CD14-positive monocyte (primary cell): ENCODE measurements at regions of chr6 and their contacts with region 1.

Region 1: DNA sequence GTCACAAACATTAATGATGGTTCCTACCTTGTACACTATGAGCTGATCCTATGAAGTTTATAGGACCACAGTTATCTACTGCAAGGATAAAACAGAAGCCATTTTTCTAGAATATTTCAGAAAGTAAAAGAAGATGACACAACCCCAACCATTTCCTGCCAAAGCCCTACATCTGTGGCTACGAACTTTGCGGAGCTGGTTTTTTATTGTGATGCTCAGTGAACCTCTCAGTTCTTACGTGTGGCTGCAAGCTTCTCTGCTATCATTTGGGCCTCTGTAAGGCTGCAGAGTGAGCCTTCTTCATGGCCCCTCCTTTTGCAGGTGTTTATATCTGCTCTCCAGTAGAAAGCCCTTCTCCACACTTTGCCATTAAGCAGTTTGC is 17.8 kb upstream of the TAGAP start:
- DNase-seq: peak; percentile 46 to 68 (median 63)
- H3K4me3 ChIP-seq: peak overlapping the region in 1 of 3 experiments; percentile 52
- H3K4me3 Mint-ChIP-seq: peak overlapping the region; percentile 39 to 75
- H3K27ac ChIP-seq: peak overlapping the region; percentile 76 to 94
- H3K27ac Mint-ChIP-seq: peak overlapping the region; percentile 93 to 99 (median 97)
- H3K4me1 ChIP-seq: peaks cover 50 to 55% of the 10 kb centered on the region in 2 donors
- H3K4me1 Mint-ChIP-seq: peaks cover 57% of the 10 kb centered on the region
- H3K27me3 ChIP-seq: no peaks in the 10 kb centered on the region
- H3K27me3 Mint-ChIP-seq: no peaks in the 10 kb centered on the region
- CTCF ChIP-seq: no peak

Region 2: DNA sequence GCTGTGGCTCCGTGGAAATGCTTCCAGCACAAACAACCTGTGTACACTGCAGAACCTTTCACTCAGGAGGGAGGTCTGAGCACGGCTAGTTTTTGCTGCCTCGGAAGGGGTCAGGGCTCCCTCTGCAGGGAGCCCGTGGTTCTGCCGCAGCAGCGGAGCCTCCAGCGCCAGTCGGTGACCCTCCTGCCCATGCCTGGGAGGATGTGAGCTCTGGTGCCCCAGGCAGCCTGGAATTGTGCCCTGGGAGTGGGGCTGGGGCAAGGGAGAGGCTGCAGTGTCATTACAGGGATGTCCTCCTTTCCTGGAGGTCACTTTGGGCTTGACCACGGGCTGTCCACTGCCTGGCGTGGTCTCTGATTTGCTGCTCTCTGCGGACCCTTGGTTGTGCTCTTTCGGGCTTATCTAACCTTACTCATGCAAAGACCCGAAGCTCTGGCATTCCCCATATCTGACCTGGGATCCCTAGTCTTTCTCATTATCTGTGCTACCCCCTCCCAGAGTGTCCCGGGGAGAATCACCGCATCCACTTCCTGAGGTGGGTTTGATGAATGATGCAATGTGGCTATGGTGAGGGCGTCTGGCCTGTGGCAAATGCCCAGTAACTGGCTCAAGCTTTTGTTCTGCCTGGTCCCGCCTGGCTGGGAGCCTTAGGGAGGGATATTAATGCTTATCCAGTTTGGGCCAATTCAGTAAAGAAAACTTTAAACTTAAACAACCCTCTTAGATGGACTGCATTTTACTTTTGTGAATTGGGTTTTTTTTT is 41.8 kb after region 1 on chr6:
- intact Hi-C with region 1: loop called in 1 of 2 experiments (anchors 5 kb)
- DNase-seq: peak; percentile 76 to 82 (median 79)
- H3K4me3 ChIP-seq: no peak overlapping the region
- H3K4me3 Mint-ChIP-seq: peak overlapping the region in 1 of 2 donors; percentile 4
- H3K27ac ChIP-seq: peak overlapping the region in 1 of 2 donors; percentile 18
- H3K27ac Mint-ChIP-seq: peak overlapping the region in 6 of 7 donors; percentile 73 to 85 (median 80)
- H3K4me1 ChIP-seq: peaks cover 33 to 44% of the 10 kb centered on the region in 2 donors
- H3K4me1 Mint-ChIP-seq: peaks cover 57% of the 10 kb centered on the region
- H3K27me3 ChIP-seq: no peaks in the 10 kb centered on the region
- H3K27me3 Mint-ChIP-seq: peaks cover 0 to 1% (median 0%) of the 10 kb centered on the region in 3 donors
- CTCF ChIP-seq: peak; percentile 95